Activated CD8-positive, alpha-beta memory T cell treated with anti-CD3 and anti-CD28 coated beads, Interleukin-2, amount 10 ng/mL, durations not matched to agents 7 days and 5 days (primary cell): ENCODE measurements at regions of chr4 and their contacts with region 1.

Region 1: DNA sequence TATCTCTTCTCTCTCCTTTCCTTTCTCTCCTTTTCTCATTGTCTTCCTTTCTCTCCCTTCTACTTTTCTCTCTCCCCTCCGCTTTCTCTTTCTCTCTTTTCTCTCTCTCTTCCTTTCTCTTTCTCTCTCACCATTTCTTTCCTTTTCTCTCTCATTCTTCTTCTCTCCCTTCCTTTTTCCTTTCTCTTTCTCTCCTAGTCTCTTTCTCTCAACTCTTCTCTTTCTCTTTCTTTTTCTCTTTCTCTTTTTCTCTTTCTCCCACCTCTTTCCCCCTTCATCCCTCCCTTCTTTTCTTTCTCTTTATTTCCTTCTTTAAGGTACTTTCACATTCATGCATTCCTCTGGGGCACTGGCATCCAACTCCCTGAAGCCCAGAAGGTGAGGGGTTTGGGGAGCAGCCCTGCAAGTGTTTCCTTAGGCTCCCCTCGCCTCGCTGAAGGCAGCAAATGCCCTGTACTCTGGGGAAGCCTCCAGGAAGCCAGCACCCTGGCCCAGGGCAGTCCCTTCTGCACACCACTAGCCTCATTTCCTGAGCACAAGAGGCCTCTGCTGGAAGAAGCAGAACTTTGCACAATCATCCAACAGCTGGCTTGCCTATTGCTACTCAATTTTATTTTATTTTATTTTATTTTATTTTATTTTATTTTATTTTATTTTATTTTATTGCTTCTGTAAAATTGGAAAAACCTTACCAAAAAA is 124.2 kb downstream of the NFKB1 start:
- DNase-seq: peak; percentile 87
- ATAC-seq: peak; percentile 100
- H3K4me3 Mint-ChIP-seq: peak overlapping the region; percentile 53
- H3K27ac Mint-ChIP-seq: peak overlapping the region; percentile 88
- H3K4me1 Mint-ChIP-seq: peaks cover 40% of the 10 kb centered on the region
- H3K27me3 Mint-ChIP-seq: no peaks in the 10 kb centered on the region

Region 2: DNA sequence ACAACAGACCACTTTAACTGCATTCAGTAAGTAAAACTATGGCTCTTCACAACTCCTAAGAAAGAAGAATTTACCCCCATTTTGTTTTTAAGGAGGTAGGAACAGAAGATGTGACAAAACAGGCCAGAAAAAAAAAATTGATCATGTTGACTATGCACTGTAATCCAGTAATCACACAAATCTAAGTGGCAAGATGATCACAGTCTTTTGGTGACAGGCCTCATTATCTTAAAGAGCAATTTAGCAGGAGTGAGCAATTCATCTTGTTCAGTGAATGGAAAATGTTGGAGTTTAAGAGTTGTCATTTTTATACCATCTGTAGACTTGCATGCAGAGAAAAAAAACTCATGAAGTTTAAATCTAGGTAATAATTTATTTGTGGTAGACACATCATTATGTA is 395.2 kb before region 1 on chr4:
- CTCF ChIA-PET with region 1: no interaction called
- DNase-seq: no peak
- ATAC-seq: no peak
- H3K4me3 Mint-ChIP-seq: no peak overlapping the region
- H3K27ac Mint-ChIP-seq: no peak overlapping the region
- H3K4me1 Mint-ChIP-seq: no peaks in the 10 kb centered on the region
- H3K27me3 Mint-ChIP-seq: peaks cover 15% of the 10 kb centered on the region

Region 3: DNA sequence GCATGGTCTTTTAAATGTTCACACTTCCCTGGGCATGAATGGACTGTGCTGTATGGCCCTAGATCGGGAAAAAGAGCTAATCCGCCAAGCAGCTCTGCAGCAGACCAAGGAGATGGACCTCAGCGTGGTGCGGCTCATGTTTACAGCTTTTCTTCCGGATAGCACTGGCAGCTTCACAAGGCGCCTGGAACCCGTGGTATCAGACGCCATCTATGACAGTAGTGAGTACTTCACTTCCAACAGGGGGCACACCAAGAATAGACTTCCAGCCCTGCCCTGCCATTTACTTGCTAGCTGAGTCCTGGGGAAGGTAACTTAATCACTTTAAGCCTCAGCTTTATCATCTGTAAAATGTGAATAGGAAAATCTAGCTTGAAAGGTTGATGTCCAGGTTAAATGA is 46.6 kb before region 1 on chr4:
- CTCF ChIA-PET with region 1: interaction called, 17 read pairs
- DNase-seq: no peak
- ATAC-seq: peak; percentile 41
- H3K4me3 Mint-ChIP-seq: no peak overlapping the region
- H3K27ac Mint-ChIP-seq: no peak overlapping the region
- H3K4me1 Mint-ChIP-seq: peaks cover 66% of the 10 kb centered on the region
- H3K27me3 Mint-ChIP-seq: no peaks in the 10 kb centered on the region